Left ventricle myocardium superior (tissue), 1 donor: ENCODE measurements at regions of chr20 and their contacts with region 1.

Region 1: DNA sequence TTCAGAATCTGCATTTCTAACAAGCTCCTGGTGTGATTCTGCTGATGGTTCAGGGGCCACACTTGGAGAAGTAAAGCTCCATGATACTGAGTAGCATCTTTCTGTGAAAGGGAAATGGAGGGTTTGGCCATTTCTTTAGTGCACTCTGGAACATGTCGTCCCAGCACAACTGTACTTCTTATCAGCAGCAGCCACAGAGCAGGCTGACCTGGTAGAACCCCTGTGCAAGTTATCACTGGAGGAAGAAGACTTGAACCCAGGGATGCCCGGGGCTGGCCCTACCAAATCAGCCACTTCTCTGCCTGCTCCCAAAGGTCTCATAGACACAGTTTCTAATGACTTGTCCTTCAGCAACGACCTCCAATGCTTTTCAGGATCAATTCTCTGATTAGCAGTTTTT is 354.7 kb upstream of the PLCB4 start:
- DNase-seq: no peak
- ATAC-seq: no peak

Region 2: DNA sequence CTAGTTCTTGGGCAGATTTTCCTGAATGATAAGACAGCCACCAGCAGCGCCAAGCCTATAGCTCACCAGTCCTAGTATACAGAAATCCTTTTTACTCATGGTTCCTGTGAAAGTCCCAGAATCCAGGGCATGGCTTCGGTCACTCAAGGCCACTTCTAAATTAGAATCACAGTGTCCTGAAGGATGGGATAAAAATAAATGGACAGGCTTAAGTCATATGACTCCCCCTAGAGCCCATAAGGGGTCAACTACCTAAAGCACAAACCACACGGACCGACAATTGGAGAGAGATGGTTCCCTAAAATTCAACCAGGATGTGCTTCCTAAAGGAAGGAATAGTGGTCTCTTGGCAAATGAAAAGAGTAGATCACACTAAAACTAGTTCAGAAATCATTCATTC is 49.4 kb before region 1 on chr20:
- intact Hi-C with region 1: no loop called
- DNase-seq: no peak
- ATAC-seq: peak; percentile 63

Region 3: GRCh38 chr20:8675896-8676295 is 38.3 kb before region 1 on chr20:
- intact Hi-C with region 1: loop called (anchors 2 kb)
- DNase-seq: no peak
- ATAC-seq: no peak